HEK293T (cell line): ENCODE measurements at regions of chr17 and their contacts with region 1.

Region 1: GRCh38 chr17:34542700-34543336 is 36.6 kb upstream of the TMEM132E start:
- DNase-seq: peak; percentile 22

Region 2: GRCh38 chr17:34451313-34451712 is 91.5 kb before region 1 on chr17:
- CTCF ChIA-PET with region 1: no interaction called
- POLR2A ChIA-PET with region 1: no interaction called
- DNase-seq: no peak

Region 3: DNA sequence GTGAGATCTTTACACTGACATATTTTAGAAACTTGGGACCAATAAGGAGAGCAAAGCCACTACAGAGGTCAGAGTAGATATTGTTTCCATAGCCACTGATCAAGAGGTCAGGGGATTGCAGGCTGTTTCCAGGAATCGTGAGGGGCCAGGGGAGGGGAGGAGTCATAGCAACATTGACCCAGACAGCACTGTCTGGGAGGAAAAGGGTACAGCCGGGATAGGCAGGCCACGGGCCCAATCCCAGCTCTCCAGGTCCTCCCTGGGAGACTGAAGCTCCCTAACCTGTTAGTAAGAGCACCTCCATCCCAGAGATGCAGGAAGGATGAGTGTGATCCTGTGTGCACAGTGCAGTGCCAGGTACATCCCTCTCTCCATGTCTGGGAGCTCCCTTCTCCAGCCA is 11.9 kb before region 1 on chr17:
- CTCF ChIA-PET with region 1: interaction called, 13 read pairs
- POLR2A ChIA-PET with region 1: no interaction called
- DNase-seq: no peak

Region 4: DNA sequence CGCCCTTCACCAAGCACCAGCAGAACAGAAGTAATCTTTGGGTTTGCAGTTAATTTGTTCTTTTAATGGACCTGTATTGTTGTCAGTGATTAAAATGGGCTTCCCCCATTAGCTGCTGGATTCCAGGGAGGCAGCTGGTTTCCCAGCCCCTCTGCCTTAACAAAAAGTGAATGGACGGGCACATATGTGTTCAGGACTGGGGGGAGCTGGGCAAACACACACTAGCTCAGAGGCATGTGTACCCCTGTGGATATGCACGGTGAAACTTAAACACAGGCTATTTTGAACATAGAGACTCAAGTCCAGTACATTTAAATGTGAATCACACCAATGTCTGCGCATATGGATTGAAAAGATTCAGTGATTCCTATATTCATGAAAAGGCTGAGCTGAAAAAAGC is 11.1 kb after region 1 on chr17:
- CTCF ChIA-PET with region 1: interaction called, 16 read pairs
- POLR2A ChIA-PET with region 1: no interaction called
- DNase-seq: no peak

Region 5: DNA sequence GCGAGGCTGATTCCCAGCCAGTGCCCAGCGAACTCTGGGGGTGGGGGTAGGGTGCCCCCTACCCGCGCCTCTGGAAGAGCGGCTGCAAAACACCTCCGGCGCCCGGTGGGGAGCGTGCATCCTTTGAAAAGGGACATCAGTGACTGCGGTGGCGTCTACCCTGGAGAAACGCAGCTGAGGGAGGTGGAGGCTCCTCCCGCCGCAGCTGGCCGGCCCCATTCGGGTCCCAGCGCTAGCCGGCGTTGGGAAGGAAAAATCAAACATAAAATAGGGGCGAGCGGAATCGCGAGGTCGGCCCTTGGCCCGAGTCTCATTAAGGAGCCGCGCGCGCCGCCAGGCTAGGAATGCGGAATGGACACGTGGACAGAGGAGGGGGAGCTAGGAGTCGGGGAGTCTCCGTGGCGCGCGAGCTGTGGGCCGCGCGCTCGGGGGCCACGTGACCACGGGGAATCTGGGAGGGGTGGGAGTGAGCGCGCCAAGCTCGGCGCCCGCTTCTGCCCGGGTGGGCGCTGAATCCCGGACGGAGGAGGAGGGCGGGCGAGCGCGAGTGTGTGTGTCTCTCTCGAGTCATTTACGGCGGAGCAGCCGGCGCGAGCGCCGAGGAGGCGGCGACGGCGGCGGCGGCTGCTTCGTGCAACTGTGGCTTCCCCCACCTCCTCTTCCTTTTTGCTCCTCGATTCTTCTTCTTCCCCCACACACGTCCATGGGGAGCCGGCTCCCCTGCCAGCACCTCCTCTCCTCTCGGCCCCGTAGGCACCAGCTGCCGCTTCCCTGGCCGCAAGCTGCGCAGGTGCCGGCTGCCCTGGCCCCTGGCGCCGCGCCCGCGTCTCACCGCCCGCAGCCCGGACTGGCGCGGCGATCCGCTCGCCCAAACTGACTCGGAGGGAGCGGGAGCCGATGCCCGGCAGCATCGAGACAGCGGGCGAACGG is 36.5 kb after region 1 on chr17 and contains the start of gene TMEM132E:
- CTCF ChIA-PET with region 1: interaction called, 15 read pairs
- POLR2A ChIA-PET with region 1: no interaction called
- DNase-seq: peak; percentile 19

Region 6: GRCh38 chr17:34637548-34638525 is 95.0 kb after region 1 on chr17:
- CTCF ChIA-PET with region 1: interaction called, 18 read pairs
- POLR2A ChIA-PET with region 1: no interaction called
- DNase-seq: peak; percentile 73